Posterior vena cava (tissue), 2 donors: ENCODE measurements at regions of chr10 and their contacts with region 1.

Region 1: GRCh38 chr10:71974489-71975021 is 10.4 kb downstream of the CHST3 start:
- DNase-seq: no peak

Region 2: DNA sequence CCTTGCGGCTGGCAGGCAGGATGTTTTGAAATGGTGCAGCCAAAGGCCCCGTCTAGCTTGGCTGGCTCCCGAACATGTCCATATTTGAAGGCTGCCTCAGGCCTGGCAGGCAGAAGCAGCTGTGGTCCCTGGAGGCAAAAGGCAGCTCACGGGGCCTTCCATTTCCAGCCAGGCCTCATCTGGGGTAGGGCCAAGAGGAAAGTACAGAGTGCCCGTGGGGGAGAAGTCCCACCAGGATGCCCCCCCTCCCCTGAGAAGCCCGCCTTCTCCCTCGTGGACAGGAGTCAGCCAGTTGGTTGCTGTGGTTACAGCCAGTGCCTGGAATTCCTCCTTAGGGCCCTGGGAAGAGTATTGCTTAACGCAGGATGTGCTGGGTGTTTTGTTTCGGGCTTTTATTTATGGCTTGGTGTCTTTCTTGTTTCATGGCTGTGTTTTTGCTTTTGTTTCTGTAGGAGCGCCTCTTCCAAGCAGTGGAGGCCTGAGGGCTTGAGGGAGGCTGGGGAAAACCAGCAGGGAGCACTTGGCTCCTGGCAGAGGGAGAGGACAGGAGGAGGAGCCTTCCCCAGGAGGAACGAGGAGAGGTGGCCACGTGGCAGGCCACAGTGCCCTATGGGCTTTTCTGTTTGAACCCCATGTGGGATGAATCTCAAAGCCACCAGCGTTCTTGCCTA is 35.0 kb after region 1 on chr10:
- intact Hi-C with region 1: loop called in 1 of 2 experiments (anchors 5 kb)
- DNase-seq: peak; percentile 96